Sigmoid colon (tissue), 7 donors: ENCODE measurements at regions of chr12 and their contacts with region 1.

Region 1: DNA sequence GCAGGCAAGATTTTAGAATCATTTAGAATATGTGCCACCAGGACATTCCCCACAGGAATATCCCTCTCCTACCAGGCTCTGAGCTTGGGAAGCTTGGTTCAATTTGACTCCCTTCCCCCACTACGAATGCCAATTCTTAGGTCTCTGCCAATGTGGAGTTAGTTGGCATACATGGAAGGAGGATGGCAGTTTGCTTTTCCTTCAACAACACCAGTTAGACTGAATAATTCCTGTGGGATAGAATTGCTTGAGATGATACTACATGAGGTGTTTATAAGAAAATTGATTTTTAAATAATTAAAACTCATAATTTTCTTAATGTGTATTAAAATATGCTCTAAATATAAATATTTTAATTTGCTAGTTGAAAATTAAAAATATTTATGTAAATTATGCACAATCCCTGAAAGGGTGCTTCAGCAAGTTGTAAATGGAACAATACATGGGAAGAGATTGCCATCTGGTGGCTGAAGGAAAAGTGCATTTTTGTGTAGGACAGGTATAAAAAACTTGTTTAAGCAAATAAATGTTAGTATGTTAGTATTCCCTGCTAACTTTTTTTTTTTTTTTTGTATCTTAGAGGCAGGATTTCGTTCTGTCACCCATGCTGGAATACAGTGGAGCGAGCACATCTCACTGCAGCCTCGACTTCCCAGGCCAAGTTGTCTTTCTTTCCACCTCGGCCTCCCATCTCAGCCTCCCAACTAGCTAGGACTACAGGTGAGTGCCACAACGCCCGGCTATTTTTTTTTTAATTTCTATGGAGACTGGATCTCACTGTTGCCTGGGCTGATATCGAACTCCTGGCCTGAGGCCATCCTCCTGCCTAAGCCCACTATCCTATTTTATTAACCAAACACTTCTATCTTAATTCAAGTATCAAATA is 25.8 kb upstream of the STRAP start:
- DNase-seq: no peak
- H3K4me3 ChIP-seq: no peak overlapping the region
- H3K27ac ChIP-seq: no peak overlapping the region
- H3K4me1 ChIP-seq: peaks cover 0 to 7% (median 4%) of the 10 kb centered on the region in 4 donors
- H3K27me3 ChIP-seq: no peaks in the 10 kb centered on the region
- CTCF ChIP-seq: peak; percentile 77 to 87 (median 78)
- EP300 ChIP-seq: no peak
- POLR2A ChIP-seq: no peak

Region 2: DNA sequence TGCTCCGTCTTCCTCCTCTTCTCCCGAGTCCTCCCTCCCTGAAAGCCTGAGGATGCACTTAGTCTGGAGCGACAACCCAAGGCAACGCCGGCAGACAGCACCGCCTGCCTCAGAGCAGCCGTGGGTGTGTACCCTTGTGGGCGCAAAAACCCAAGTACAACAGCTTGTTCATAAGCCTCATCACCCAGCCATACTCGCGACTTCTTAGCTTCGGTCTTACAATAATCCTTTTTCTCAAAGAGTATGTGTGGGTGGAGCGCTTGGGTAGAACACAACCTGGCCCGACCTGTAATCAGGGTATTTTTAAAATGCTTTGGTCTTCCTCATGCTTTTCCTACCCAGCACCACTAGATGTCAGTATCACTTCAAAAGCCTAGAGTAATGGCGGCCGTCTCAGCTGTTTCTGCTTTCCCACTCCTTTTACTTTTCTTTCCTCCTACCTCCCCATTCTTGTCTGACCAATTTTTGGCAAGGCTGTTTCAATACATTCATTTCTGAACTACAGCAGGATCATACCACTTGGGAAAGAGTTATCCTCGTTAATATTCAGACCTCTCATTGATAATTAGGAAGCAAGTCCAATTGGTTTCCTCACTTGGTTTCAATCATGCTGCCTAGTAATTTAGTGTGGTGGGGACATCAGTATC is 266.0 kb before region 1 on chr12:
- intact Hi-C with region 1: loop called (anchors 1 kb)
- DNase-seq: peak; percentile 68
- H3K4me3 ChIP-seq: peak overlapping the region in 3 of 4 donors; percentile 17 to 33 (median 33)
- H3K27ac ChIP-seq: no peak overlapping the region
- H3K4me1 ChIP-seq: peaks cover 0 to 5% (median 4%) of the 10 kb centered on the region in 4 donors
- H3K27me3 ChIP-seq: no peaks in the 10 kb centered on the region
- CTCF ChIP-seq: peak; percentile 87 to 96 (median 92)
- EP300 ChIP-seq: no peak
- POLR2A ChIP-seq: no peak

Region 3: DNA sequence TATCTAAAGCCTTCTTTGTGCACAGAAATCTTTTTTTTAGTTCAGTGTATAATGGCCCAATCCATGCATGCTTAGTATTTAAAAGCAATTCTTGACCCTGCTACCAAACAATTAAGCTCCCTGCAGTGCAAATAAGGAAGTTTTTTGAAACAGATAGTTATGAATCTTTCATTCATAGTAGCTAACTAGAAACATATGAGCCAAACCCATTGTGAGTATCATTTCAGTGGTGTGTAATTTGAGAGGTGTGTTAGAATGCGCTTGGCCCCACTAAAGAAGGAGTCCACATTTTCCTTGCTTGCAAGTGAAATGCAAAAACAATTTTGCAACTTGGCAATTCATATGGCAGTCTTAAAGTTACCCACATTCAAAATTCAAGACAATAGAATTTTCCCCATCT is 81.5 kb before region 1 on chr12:
- intact Hi-C with region 1: no loop called
- DNase-seq: no peak
- H3K4me3 ChIP-seq: no peak overlapping the region
- H3K27ac ChIP-seq: no peak overlapping the region
- H3K4me1 ChIP-seq: peaks cover 0 to 25% (median 23%) of the 10 kb centered on the region in 4 donors
- H3K27me3 ChIP-seq: no peaks in the 10 kb centered on the region
- CTCF ChIP-seq: no peak
- EP300 ChIP-seq: no peak
- POLR2A ChIP-seq: no peak

Region 4: GRCh38 chr12:16189849-16190248 is 333.5 kb after region 1 on chr12:
- intact Hi-C with region 1: no loop called
- DNase-seq: no peak
- H3K4me3 ChIP-seq: no peak overlapping the region
- H3K27ac ChIP-seq: no peak overlapping the region
- H3K4me1 ChIP-seq: no peaks in the 10 kb centered on the region
- H3K27me3 ChIP-seq: no peaks in the 10 kb centered on the region
- CTCF ChIP-seq: no peak
- EP300 ChIP-seq: no peak
- POLR2A ChIP-seq: no peak

Region 5: GRCh38 chr12:16285586-16285985 is 429.2 kb after region 1 on chr12:
- intact Hi-C with region 1: no loop called
- DNase-seq: no peak
- H3K4me3 ChIP-seq: no peak overlapping the region
- H3K27ac ChIP-seq: no peak overlapping the region
- H3K4me1 ChIP-seq: peaks cover 0 to 5% (median 0%) of the 10 kb centered on the region in 4 donors
- H3K27me3 ChIP-seq: no peaks in the 10 kb centered on the region
- CTCF ChIP-seq: no peak
- EP300 ChIP-seq: no peak
- POLR2A ChIP-seq: no peak

Region 6: GRCh38 chr12:16515666-16516065 is 659.3 kb after region 1 on chr12:
- intact Hi-C with region 1: no loop called
- DNase-seq: no peak
- H3K4me3 ChIP-seq: no peak overlapping the region
- H3K27ac ChIP-seq: no peak overlapping the region
- H3K4me1 ChIP-seq: no peaks in the 10 kb centered on the region
- H3K27me3 ChIP-seq: no peaks in the 10 kb centered on the region
- CTCF ChIP-seq: no peak
- EP300 ChIP-seq: no peak
- POLR2A ChIP-seq: no peak